Cardiac septum (tissue), 1 donor: ENCODE measurements at regions of chr18 and their contacts with region 1.

Region 1: GRCh38 chr18:35407871-35408481 is 30.8 kb upstream of the ZNF396 start:
- DNase-seq: no peak

Region 2: GRCh38 chr18:35459005-35459441 is 51.0 kb after region 1 on chr18:
- intact Hi-C with region 1: loop called (anchors 5 kb)
- DNase-seq: peak; percentile 90

Region 3: GRCh38 chr18:35756506-35757117 is 348.6 kb after region 1 on chr18:
- intact Hi-C with region 1: loop called (anchors 10 kb)
- DNase-seq: no peak

Region 4: GRCh38 chr18:35835833-35836232 is 427.9 kb after region 1 on chr18:
- intact Hi-C with region 1: no loop called
- DNase-seq: no peak